Caco-2 (cell line): ENCODE measurements at regions of chr1 and their contacts with region 1.

Region 1: DNA sequence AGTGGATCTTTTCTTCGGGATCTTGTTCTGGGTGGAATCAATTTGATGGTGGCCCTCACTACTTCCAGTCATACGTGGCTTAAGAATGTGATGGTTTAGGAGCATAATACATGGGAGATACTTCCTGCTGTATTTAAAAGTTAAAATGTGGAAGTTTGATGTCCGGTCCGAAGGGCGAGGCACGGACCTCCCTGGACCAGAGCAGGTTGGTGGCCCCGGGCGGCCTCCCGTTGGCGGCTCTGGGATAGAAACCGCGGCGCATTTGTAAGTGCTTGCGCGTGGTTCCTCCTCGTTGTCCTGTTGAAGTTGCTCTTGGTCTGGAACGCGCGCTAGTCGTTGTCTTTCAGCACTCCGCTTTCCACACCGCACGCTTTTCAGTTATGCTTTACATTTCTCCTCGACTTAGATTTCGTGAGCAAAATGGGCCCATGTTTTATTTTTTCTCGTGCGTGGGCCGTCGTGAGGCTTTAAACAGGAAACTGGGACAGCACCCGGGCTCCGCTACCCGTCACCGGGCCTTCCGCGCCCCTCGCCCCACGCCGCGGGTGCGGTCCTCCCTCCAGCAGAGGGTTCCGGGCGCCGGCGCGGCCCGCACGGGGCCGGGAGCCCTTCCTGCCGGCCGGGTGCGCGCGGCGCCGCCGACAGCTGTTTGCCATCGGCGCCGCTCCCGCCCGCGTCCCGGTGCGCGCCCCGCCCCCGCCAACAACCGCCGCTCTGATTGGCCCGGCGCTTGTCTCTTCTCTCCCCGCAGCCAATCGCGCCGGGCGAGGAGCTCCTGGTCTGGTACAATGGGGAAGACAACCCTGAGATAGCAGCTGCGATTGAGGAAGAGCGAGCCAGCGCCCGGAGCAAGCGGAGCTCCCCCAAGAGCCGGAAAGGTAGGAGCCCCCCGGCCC is 48.9 kb downstream of the PRDM2 start:
- DNase-seq: peak; percentile 94 to 95
- H3K4me3 ChIP-seq: peak overlapping the region; percentile 83
- H3K4me3 Mint-ChIP-seq: peak overlapping the region; percentile 84
- H3K27ac Mint-ChIP-seq: peak overlapping the region; percentile 84
- H3K4me1 ChIP-seq: 0 out of 2 replicates have a peak, but pooled peaks cover 7% of the 10 kb centered on the region
- H3K4me1 Mint-ChIP-seq: peaks cover 9% of the 10 kb centered on the region
- H3K27me3 ChIP-seq: no peaks in the 10 kb centered on the region
- H3K27me3 Mint-ChIP-seq: no peaks in the 10 kb centered on the region
- CTCF ChIP-seq: peak in 1 of 2 experiments; percentile 2

Region 2: GRCh38 chr1:13699936-13700520 is 48.8 kb before region 1 on chr1 and contains the start of gene PRDM2:
- CTCF ChIA-PET with region 1: no interaction called
- POLR2A ChIA-PET with region 1: interaction called, 3 read pairs
- intact Hi-C with region 1: loop called (anchors 5 kb)
- DNase-seq: peak; percentile 35 to 55
- H3K4me3 ChIP-seq: peak within 1 kb of the TSS; percentile 75
- H3K4me3 Mint-ChIP-seq: peak within 1 kb of the TSS; percentile 90
- H3K27ac Mint-ChIP-seq: peak within 1 kb of the TSS; percentile 93
- H3K4me1 ChIP-seq: 0 out of 2 replicates have a peak, but pooled peaks cover 6% of the 10 kb centered on the region
- H3K4me1 Mint-ChIP-seq: peaks cover 6% of the 10 kb centered on the region
- H3K27me3 ChIP-seq: no peaks in the 10 kb centered on the region
- H3K27me3 Mint-ChIP-seq: no peaks in the 10 kb centered on the region
- CTCF ChIP-seq: no peak
- total RNA-seq, gene PRDM2: 29.8 and 32.7 TPM in 2 replicates